ENCODE measurements at regions of chr1 and their contacts with region 1.

Region 1: GRCh38 chr1:84442256-84442655 is 36.8 kb upstream of the RPF1 start:
- DNase-seq: peak in 5 of 35 experiments; percentile 12 to 85 (median 39)
- ATAC-seq: peak; percentile 91 to 98 (median 95)
- H3K4me3 ChIP-seq: no peak overlapping the region
- H3K4me3 Mint-ChIP-seq: peak overlapping the region in 1 of 3 donors; percentile 52
- H3K27ac ChIP-seq: no peak overlapping the region
- H3K27ac Mint-ChIP-seq: peak overlapping the region; percentile 34 to 35
- H3K4me1 ChIP-seq: peaks cover 18 to 20% of the 10 kb centered on the region in 2 experiments
- H3K4me1 Mint-ChIP-seq: peaks cover 15 to 22% (median 19%) of the 10 kb centered on the region in 3 donors
- H3K27me3 ChIP-seq: peaks cover 0 to 4% of the 10 kb centered on the region in 2 experiments
- H3K27me3 Mint-ChIP-seq: peaks cover 9 to 12% of the 10 kb centered on the region in 2 donors

Region 2: GRCh38 chr1:84223751-84224432 is 218.4 kb before region 1 on chr1:
- CTCF ChIA-PET with region 1: interaction called in 1 of 2 experiments, 11 read pairs
- POLR2A ChIA-PET with region 1: no interaction called
- DNase-seq: no peak
- ATAC-seq: no peak
- H3K4me3 ChIP-seq: no peak overlapping the region
- H3K4me3 Mint-ChIP-seq: no peak overlapping the region
- H3K27ac ChIP-seq: no peak overlapping the region
- H3K27ac Mint-ChIP-seq: peak overlapping the region in 1 of 2 donors; percentile 58
- H3K4me1 ChIP-seq: peaks cover 0 to 19% of the 10 kb centered on the region in 2 experiments
- H3K4me1 Mint-ChIP-seq: peaks cover 38 to 50% (median 41%) of the 10 kb centered on the region in 3 donors
- H3K27me3 ChIP-seq: no peaks in the 10 kb centered on the region
- H3K27me3 Mint-ChIP-seq: no peaks in the 10 kb centered on the region

Region 3: DNA sequence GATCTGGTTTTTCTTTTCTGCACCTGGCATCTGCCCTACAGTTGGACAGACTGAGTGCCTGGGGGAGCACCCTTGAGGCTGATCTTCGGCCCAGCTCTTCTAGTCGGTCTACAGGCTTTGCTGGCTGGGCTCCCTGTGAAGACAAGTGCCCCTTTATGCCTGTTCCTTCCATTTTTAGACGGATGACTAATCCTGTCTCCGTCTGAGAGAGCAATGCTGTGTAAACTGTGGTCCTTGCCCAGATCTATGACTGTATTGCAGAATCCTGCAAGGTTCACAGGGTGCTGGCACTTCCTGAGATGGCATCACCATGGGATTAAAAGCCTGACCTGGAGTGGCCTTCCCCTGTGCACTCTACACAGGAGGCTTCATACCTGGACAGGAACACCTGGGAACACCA is 188.4 kb before region 1 on chr1:
- CTCF ChIA-PET with region 1: no interaction called
- POLR2A ChIA-PET with region 1: no interaction called
- DNase-seq: no peak
- ATAC-seq: no peak
- H3K4me3 ChIP-seq: no peak overlapping the region
- H3K4me3 Mint-ChIP-seq: no peak overlapping the region
- H3K27ac ChIP-seq: no peak overlapping the region
- H3K27ac Mint-ChIP-seq: no peak overlapping the region
- H3K4me1 ChIP-seq: no peaks in the 10 kb centered on the region
- H3K4me1 Mint-ChIP-seq: no peaks in the 10 kb centered on the region
- H3K27me3 ChIP-seq: no peaks in the 10 kb centered on the region
- H3K27me3 Mint-ChIP-seq: no peaks in the 10 kb centered on the region

Region 4: GRCh38 chr1:84506002-84506728 is 63.9 kb after region 1 on chr1 and contains the starts of genes GNG5 and SPATA1:
- CTCF ChIA-PET with region 1: interaction called in 1 of 2 experiments, 10 read pairs
- POLR2A ChIA-PET with region 1: no interaction called
- DNase-seq: peak; percentile 91 to 99 (median 96)
- ATAC-seq: peak; percentile 91 to 94 (median 91)
- H3K4me3 ChIP-seq: peak within 1 kb of the TSS; percentile 81 to 88
- H3K4me3 Mint-ChIP-seq: peak within 1 kb of the TSS; percentile 98 to 100 (median 98)
- H3K27ac ChIP-seq: peak within 1 kb of the TSS; percentile 83
- H3K27ac Mint-ChIP-seq: peak within 1 kb of the TSS; percentile 94 to 97
- H3K4me1 ChIP-seq: peaks cover 9 to 27% of the 10 kb centered on the region in 2 experiments
- H3K4me1 Mint-ChIP-seq: peaks cover 42 to 53% (median 46%) of the 10 kb centered on the region in 3 donors
- H3K27me3 ChIP-seq: no peaks in the 10 kb centered on the region
- H3K27me3 Mint-ChIP-seq: no peaks in the 10 kb centered on the region
- total RNA-seq, gene GNG5: 21.7 to 41.1 (median 34.9) TPM
- total RNA-seq, gene SPATA1: 0.25 to 3.5 (median 2.3) TPM

Region 5: GRCh38 chr1:84573967-84574842 is 131.9 kb after region 1 on chr1 and contains the start of gene CTBS:
- CTCF ChIA-PET with region 1: interaction called, 4 to 12 read pairs
- POLR2A ChIA-PET with region 1: interaction called in 1 of 2 experiments, 3 read pairs
- DNase-seq: peak; percentile 62 to 92 (median 77)
- ATAC-seq: peak; percentile 91 to 97 (median 96)
- H3K4me3 ChIP-seq: peak within 1 kb of the TSS; percentile 78 to 82
- H3K4me3 Mint-ChIP-seq: peak within 1 kb of the TSS; percentile 94 to 97 (median 97)
- H3K27ac ChIP-seq: peak within 1 kb of the TSS; percentile 94
- H3K27ac Mint-ChIP-seq: peak within 1 kb of the TSS; percentile 98 to 99
- H3K4me1 ChIP-seq: peaks cover 11 to 14% of the 10 kb centered on the region in 2 experiments
- H3K4me1 Mint-ChIP-seq: peaks cover 41 to 52% (median 44%) of the 10 kb centered on the region in 3 donors
- H3K27me3 ChIP-seq: no peaks in the 10 kb centered on the region
- H3K27me3 Mint-ChIP-seq: no peaks in the 10 kb centered on the region
- total RNA-seq, gene CTBS: 14.8 to 20.3 (median 16.4) TPM

Region 6: DNA sequence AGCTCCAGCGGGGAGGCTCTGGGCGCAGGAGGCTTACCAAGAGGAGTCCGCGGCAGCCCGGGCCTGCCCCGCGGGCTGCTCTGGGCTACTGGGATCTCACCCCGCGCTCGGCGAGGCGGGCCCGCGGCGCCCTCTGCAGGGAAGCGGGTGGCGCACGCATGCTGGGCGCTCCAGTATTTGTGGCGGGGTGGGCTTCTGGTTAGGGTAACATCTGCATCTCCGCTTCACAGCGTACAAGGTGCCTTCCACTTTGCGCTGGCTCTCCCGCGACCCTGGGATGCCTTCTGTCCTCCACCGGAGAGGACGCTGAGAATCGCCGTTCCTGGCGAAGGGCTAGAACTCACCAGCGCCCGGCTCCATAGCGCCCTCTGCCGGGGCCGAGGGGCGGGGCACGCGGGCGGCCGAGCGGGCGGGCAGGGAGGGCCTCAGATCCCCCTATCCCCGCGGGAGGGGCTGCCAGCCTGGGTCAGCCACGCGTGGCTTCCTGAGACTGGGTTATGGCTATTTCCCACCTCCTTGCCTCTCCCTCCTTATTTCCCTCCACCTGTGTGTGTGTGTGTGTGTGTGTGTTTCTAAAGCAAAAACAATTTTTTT is 178.6 kb after region 1 on chr1:
- CTCF ChIA-PET with region 1: interaction called, 5 to 11 read pairs
- POLR2A ChIA-PET with region 1: interaction called in 1 of 2 experiments, 5 read pairs
- DNase-seq: peak; percentile 45 to 86 (median 70)
- ATAC-seq: peak; percentile 91 to 95 (median 92)
- H3K4me3 ChIP-seq: peak overlapping the region; percentile 65 to 69
- H3K4me3 Mint-ChIP-seq: peak overlapping the region; percentile 81 to 87 (median 86)
- H3K27ac ChIP-seq: no peak overlapping the region
- H3K27ac Mint-ChIP-seq: peak overlapping the region in 1 of 2 donors; percentile 87
- H3K4me1 ChIP-seq: peaks cover 0 to 9% of the 10 kb centered on the region in 2 experiments
- H3K4me1 Mint-ChIP-seq: peaks cover 0 to 7% (median 5%) of the 10 kb centered on the region in 3 donors
- H3K27me3 ChIP-seq: peaks cover 0 to 3% of the 10 kb centered on the region in 2 experiments
- H3K27me3 Mint-ChIP-seq: peaks cover 0 to 4% of the 10 kb centered on the region in 2 donors

Region 7: DNA sequence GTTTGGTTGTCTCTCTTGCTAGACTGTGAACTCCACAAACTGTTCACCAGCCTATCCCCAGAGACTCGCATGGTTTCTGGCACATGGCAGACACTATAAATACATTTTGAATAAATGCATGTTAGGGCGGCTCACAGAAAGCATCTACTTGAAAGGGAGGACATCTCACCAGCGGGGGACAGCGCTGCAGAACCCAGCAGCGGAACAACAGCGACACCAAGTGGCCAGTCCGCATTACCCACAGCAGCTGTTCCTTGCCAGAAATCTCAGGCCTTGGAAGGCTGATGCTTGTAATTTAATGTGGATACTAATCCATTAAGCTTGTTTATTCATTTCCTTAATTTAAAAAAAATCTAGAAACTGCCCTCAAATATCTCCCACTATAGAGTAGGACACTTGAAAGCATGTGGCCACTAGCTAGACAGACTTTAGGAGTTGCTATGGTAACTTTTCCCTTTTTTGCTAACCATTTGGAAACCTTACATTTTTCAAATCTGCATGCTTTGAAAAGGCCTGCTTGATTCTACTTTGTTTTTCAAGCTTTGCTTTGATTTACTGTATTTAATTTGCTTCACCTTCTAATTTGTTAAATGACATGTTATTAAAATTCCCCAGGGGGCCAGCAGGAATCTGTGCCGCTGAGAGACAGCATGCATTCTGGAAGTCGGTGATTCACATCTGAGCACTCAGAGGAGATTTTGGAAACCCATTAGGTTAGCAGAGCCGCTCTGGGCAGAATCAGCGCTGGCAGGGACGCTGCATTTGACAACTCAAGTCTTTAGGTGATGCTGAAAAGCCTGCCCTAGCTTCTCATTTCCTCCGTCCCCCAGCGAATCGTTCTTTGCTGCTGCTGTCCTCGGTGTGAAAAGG is 311.5 kb after region 1 on chr1:
- CTCF ChIA-PET with region 1: interaction called, 6 to 14 read pairs
- POLR2A ChIA-PET with region 1: no interaction called
- DNase-seq: peak; percentile 33 to 85 (median 63)
- ATAC-seq: peak; percentile 74 to 95 (median 92)
- H3K4me3 ChIP-seq: no peak overlapping the region
- H3K4me3 Mint-ChIP-seq: no peak overlapping the region
- H3K27ac ChIP-seq: no peak overlapping the region
- H3K27ac Mint-ChIP-seq: no peak overlapping the region
- H3K4me1 ChIP-seq: peaks cover 0 to 2% of the 10 kb centered on the region in 2 experiments
- H3K4me1 Mint-ChIP-seq: peaks cover 4 to 6% (median 4%) of the 10 kb centered on the region in 3 donors
- H3K27me3 ChIP-seq: peaks cover 0 to 9% of the 10 kb centered on the region in 2 experiments
- H3K27me3 Mint-ChIP-seq: peaks cover 11 to 13% of the 10 kb centered on the region in 2 donors

Region 8: GRCh38 chr1:84781946-84782771 is 339.9 kb after region 1 on chr1:
- CTCF ChIA-PET with region 1: interaction called in 1 of 2 experiments, 10 read pairs
- POLR2A ChIA-PET with region 1: no interaction called
- DNase-seq: peak; percentile 42 to 85 (median 70)
- ATAC-seq: peak; percentile 86 to 94 (median 88)
- H3K4me3 ChIP-seq: peak overlapping the region; percentile 20 to 32
- H3K4me3 Mint-ChIP-seq: peak overlapping the region; percentile 75 to 78 (median 77)
- H3K27ac ChIP-seq: no peak overlapping the region
- H3K27ac Mint-ChIP-seq: peak overlapping the region; percentile 47 to 88
- H3K4me1 ChIP-seq: peaks cover 11 to 24% of the 10 kb centered on the region in 2 experiments
- H3K4me1 Mint-ChIP-seq: peaks cover 30 to 34% (median 30%) of the 10 kb centered on the region in 3 donors
- H3K27me3 ChIP-seq: no peaks in the 10 kb centered on the region
- H3K27me3 Mint-ChIP-seq: no peaks in the 10 kb centered on the region